ENCODE measurements at regions of chr11 and their contacts with region 1.

Region 1: GRCh38 chr11:10490398-10491241 is 35.6 kb downstream of the AMPD3 start:
- DNase-seq: peak; percentile 81
- H3K4me3 ChIP-seq: no peak overlapping the region
- H3K27ac ChIP-seq: peak overlapping the region; percentile 90
- H3K4me1 ChIP-seq: peaks cover 38% of the 10 kb centered on the region
- H3K27me3 ChIP-seq: no peaks in the 10 kb centered on the region
- CTCF ChIP-seq: no peak

Region 2: DNA sequence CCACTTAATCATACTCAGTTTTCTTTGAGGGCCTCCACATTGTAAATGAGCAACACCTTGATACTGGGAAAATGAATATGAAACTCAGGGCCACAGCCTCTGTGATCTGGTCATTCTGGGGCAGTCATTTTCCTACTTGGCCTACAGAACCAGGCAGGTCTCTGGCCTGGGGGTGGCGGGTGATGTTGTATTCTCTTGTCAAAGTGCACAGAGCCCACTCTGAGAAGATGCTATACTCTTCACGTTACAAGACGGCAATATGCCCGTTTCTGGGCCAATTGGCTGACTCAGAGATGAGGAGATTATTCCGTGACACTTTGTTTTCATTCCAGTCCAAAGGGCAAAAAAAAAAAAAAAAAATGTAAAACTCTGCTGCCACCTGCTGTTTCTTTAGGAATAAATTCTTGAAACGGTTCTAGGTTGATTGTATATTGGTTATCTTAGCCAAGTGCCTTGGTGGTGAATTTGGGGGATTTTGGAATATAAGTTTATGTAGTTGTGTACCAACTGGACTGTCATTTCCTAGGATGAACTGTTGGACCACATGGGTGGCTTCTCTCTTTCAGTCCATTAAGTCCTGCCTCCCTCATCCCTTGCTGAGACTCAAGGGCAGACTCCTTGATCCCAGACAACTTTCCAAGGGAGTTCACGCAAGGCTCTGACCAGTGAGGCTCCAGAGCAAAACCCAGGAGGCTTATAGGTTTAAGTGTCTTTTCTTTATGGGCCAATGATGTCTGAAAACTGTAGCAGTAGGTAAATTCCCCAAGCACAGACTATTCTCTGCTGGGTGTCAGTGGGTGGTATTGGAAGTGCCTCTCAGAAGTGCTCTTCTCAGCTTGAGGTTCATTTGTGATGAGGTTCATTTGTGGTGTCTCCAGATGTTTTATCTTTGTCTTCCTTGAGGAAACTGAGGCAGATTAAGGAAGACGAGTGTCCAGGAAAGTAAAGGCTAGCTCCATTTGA is 167.5 kb before region 1 on chr11:
- CTCF ChIA-PET with region 1: no interaction called
- dilution Hi-C with region 1: no loop called
- in situ Hi-C with region 1: no loop called
- intact Hi-C with region 1: no loop called
- DNase-seq: peak; percentile 84
- H3K4me3 ChIP-seq: no peak overlapping the region
- H3K27ac ChIP-seq: peak overlapping the region; percentile 57
- H3K4me1 ChIP-seq: peaks cover 6% of the 10 kb centered on the region
- H3K27me3 ChIP-seq: no peaks in the 10 kb centered on the region
- CTCF ChIP-seq: peak; percentile 42 to 49

Region 3: GRCh38 chr11:10379022-10379421 is 111.6 kb before region 1 on chr11:
- CTCF ChIA-PET with region 1: no interaction called
- dilution Hi-C with region 1: no loop called
- in situ Hi-C with region 1: no loop called
- intact Hi-C with region 1: no loop called
- DNase-seq: no peak
- H3K4me3 ChIP-seq: no peak overlapping the region
- H3K27ac ChIP-seq: no peak overlapping the region
- H3K4me1 ChIP-seq: no peaks in the 10 kb centered on the region
- H3K27me3 ChIP-seq: no peaks in the 10 kb centered on the region
- CTCF ChIP-seq: no peak

Region 4: GRCh38 chr11:10450464-10451425 is 39.9 kb before region 1 on chr11:
- CTCF ChIA-PET with region 1: no interaction called
- dilution Hi-C with region 1: no loop called
- in situ Hi-C with region 1: no loop called
- intact Hi-C with region 1: loop called (anchors 2 kb)
- DNase-seq: peak; percentile 50
- H3K4me3 ChIP-seq: peak overlapping the region; percentile 47 to 60 (median 59)
- H3K27ac ChIP-seq: peak overlapping the region; percentile 60
- H3K4me1 ChIP-seq: peaks cover 46% of the 10 kb centered on the region
- H3K27me3 ChIP-seq: no peaks in the 10 kb centered on the region
- CTCF ChIP-seq: peak; percentile 46 to 72

Region 5: GRCh38 chr11:10505278-10506007 is 14.8 kb after region 1 on chr11:
- CTCF ChIA-PET with region 1: no interaction called
- dilution Hi-C with region 1: no loop called
- in situ Hi-C with region 1: no loop called
- intact Hi-C with region 1: loop called (anchors 2 kb)
- DNase-seq: no peak
- H3K4me3 ChIP-seq: no peak overlapping the region
- H3K27ac ChIP-seq: peak overlapping the region; percentile 74
- H3K4me1 ChIP-seq: peaks cover 17% of the 10 kb centered on the region
- H3K27me3 ChIP-seq: no peaks in the 10 kb centered on the region
- CTCF ChIP-seq: no peak

Region 6: GRCh38 chr11:10534316-10534715 is 43.7 kb after region 1 on chr11:
- CTCF ChIA-PET with region 1: no interaction called
- dilution Hi-C with region 1: loop called (anchors 5 kb)
- in situ Hi-C with region 1: no loop called
- intact Hi-C with region 1: no loop called
- DNase-seq: no peak
- H3K4me3 ChIP-seq: no peak overlapping the region
- H3K27ac ChIP-seq: no peak overlapping the region
- H3K4me1 ChIP-seq: no peaks in the 10 kb centered on the region
- H3K27me3 ChIP-seq: no peaks in the 10 kb centered on the region
- CTCF ChIP-seq: no peak

Region 7: GRCh38 chr11:10540923-10541560 is 50.4 kb after region 1 on chr11 and contains the start of gene RNF141:
- CTCF ChIA-PET with region 1: no interaction called
- dilution Hi-C with region 1: no loop called
- in situ Hi-C with region 1: no loop called
- intact Hi-C with region 1: loop called (anchors 2 kb)
- DNase-seq: peak; percentile 91
- H3K4me3 ChIP-seq: peak within 1 kb of the TSS; percentile 64 to 89 (median 72)
- H3K27ac ChIP-seq: peak within 1 kb of the TSS; percentile 85
- H3K4me1 ChIP-seq: peaks cover 9% of the 10 kb centered on the region
- H3K27me3 ChIP-seq: no peaks in the 10 kb centered on the region
- CTCF ChIP-seq: peak; percentile 69 to 91
- total RNA-seq, gene RNF141: 45.7 to 58.2 TPM

Region 8: DNA sequence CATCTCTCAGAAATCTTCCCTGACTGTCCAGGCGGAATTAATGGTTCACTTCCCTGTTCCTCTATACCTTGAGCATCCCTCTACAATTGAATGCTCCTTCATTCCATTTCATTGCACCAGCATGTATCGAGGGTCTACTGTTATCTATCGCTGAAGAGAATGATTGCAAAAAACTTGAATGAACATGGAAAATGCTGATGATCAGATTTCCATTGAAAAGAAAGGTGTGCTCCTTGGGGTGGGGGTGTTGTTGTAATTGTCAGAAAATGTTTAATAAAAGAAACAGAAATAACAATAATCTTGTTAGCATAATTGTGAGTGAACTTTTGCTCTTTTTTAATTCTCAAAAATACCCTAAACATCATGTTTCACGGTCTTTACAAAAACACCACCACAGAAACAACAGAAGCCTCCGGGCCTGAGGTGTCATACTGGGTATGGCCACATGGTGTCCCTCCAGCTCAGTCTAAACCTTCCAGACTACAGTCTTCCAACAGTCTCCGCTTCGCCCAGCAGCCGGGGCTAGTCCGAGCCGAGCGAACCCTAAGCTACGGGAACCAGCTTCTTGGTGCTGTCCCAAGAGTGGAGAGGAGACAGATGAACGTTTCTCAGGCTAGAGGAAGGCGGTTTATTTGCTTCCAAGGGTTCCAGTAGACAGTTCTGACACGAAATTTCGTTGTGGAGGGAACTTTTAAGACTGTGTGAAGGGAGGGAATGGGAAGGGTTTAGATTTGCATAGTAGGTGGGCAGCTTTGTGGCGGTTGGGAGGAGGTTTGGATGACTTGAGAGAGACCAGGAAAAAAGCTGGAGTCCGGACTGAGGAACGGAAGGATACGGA is 443.1 kb after region 1 on chr11:
- CTCF ChIA-PET with region 1: no interaction called
- dilution Hi-C with region 1: no loop called
- in situ Hi-C with region 1: no loop called
- intact Hi-C with region 1: no loop called
- DNase-seq: peak; percentile 88
- H3K4me3 ChIP-seq: peak overlapping the region; percentile 41 to 60 (median 50)
- H3K27ac ChIP-seq: peak overlapping the region; percentile 19
- H3K4me1 ChIP-seq: peaks cover 17% of the 10 kb centered on the region
- H3K27me3 ChIP-seq: no peaks in the 10 kb centered on the region
- CTCF ChIP-seq: peak; percentile 89 to 98

Measured in mammary epithelial cell (primary cell).